ENCODE measurements at regions of chr15 and their contacts with region 1.

Region 1: DNA sequence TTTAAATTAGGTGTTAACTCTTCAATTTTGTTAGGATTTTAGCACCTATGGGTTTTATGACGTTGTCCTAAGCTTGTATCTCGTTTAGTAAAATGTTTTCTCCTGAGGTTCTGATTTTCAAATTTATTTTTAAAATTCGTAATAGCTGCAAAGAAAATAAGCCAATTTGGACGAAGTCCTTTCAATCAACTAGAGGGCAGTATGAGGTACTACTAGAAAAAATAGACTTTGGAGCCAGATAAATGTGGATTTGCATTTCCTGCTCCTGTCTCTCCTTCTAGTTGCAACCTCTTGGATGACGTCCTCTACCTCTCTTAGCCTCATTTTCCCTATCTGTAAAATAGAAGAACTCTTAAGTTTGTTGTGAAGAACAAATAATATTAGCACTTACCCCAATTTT is 81.1 kb downstream of the SLTM start:
- DNase-seq: no peak
- H3K4me3 ChIP-seq: no peak overlapping the region
- H3K27ac ChIP-seq: no peak overlapping the region
- H3K4me1 ChIP-seq: no peaks in the 10 kb centered on the region
- H3K27me3 ChIP-seq: no peaks in the 10 kb centered on the region
- CTCF ChIP-seq: peak in 1 of 3 experiments; percentile 7; a peak in 1 of 4 replicates
- EP300 ChIP-seq: no peak
- POLR2A ChIP-seq: no peak
- RAD21 ChIP-seq: peak in 1 of 2 experiments; percentile 24; a peak in 1 of 4 replicates

Region 2: DNA sequence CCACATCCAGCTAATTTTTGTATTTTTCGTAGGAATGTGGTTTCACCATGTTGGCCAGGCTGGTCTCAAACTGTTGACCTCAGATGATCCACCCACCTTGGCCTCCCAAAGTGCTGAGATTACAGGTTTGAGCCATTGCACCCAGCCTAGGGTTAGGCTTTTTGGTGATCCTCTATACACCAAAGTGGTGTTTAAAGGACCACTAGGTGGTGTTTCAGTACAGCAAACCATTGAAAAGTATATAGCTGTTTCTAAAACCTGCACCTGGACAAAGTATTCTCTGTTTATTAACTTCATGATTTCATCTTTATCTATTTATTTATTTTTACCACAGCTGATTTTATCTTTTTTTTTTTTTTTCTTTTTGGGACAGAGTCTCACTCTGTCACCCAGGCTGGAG is 12.9 kb before region 1 on chr15:
- CTCF ChIA-PET with region 1: interaction called, 15 read pairs
- POLR2A ChIA-PET with region 1: no interaction called
- DNase-seq: no peak
- H3K4me3 ChIP-seq: no peak overlapping the region
- H3K27ac ChIP-seq: no peak overlapping the region
- H3K4me1 ChIP-seq: peaks cover 0 to 3% (median 0%) of the 10 kb centered on the region in 4 experiments; a peak in 1 of 7 replicates
- H3K27me3 ChIP-seq: no peaks in the 10 kb centered on the region
- CTCF ChIP-seq: peak in 1 of 3 experiments; percentile 37; a peak in 2 of 4 replicates
- EP300 ChIP-seq: no peak
- POLR2A ChIP-seq: no peak
- RAD21 ChIP-seq: peak; percentile 59 to 60

Region 3: DNA sequence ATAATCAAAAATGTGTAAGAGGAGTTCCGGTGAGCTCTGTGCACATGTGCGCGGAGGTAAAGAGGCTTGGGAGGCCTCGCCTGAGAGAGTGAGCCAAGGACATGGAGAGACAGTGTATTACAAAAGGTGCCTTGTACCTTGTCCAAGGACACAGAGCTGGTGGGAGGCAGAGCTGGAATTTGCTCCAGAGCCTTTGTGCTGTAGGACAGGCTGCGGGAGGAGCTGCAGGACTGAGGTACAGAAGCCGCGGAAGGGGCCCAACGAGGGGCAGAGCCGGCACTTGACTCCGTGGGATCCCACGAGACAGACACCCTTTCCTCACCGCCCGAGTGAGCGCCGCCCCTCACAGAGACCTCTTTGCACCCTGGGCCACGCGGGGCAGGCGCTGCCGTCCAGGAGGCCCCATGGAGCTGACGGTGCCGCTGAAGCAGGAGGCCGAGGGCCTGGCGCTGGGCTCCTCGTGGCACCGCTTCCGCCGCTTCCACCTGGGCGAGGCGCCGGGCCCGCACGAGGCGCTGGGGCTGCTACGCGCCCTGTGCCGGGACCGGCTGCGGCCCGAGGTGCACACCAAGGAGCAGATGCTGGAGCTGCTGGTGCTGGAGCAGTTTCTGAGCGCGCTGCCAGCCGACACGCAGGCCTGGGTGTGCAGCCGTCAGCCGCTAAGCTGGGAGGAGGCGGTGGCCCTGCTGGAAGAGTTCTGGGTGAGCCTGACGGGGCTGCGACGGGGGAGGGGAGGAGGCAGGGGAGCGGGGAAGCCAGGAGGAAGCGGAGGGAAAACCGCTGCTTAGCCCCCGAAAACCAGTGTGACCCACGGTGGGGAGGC is 12.5 kb after region 1 on chr15:
- CTCF ChIA-PET with region 1: interaction called, 18 read pairs
- POLR2A ChIA-PET with region 1: no interaction called
- DNase-seq: peak; percentile 27 to 83
- H3K4me3 ChIP-seq: peak overlapping the region; percentile 4 to 51 (median 11); a peak in 6 of 8 replicates
- H3K27ac ChIP-seq: no peak overlapping the region
- H3K4me1 ChIP-seq: peaks cover 0 to 11% (median 5%) of the 10 kb centered on the region in 4 experiments; a peak in 3 of 7 replicates
- H3K27me3 ChIP-seq: peaks cover 0 to 5% (median 0%) of the 10 kb centered on the region in 4 experiments; a peak in 2 of 7 replicates
- CTCF ChIP-seq: no peak
- EP300 ChIP-seq: no peak
- POLR2A ChIP-seq: no peak; a peak in 1 of 3 replicates
- RAD21 ChIP-seq: peak; percentile 25 to 35; a peak in 3 of 4 replicates

Measured in H1 (cell line).